ENCODE measurements at regions of chr14 and their contacts with region 1.

Region 1: DNA sequence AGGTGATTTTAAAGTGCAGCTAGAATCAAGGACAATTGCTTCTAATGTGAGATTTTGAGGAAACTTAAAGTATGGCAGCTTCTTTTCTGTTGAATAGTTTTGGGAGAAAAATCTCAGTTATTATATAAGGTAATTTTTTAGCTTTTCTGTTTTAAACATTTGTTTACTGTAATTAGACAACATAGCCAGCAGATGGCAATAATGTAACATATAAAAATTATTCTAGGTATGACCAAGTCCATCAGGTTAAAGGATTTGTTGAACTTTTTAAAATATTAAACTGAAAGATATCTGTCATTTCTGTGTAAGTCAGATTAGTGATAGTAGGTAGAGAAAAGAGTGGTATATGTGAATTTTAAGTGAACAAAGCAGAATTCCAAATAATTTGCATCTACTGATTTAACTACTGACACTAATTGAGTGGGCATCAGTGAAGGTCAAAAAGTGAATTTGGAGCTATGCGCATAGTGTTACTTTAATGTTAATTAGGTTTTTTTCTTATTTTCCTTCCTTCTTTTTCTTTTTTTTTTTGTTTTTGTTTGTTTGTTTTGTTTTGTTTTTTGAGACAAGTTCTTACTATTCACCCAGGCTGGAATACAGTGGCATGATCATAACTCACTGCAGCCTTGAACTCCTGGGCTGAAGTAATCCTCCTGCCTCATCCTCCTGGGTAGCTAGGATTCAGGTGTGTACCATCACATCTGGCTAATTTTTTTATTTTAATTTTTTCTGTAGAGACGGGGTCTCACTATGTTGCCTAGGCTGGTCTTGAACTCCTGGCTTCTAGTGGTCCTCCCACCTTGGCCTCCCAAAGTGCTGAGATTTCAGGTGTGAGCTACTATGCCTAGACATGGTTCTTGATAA is 18.6 kb downstream of the PRORP start:
- DNase-seq: peak; percentile 45
- H3K4me3 ChIP-seq: no peak overlapping the region
- H3K27ac ChIP-seq: no peak overlapping the region
- H3K4me1 ChIP-seq: no peaks in the 10 kb centered on the region
- H3K27me3 ChIP-seq: no peaks in the 10 kb centered on the region
- CTCF ChIP-seq: peak; percentile 71
- EP300 ChIP-seq: no peak
- RAD21 ChIP-seq: peak; percentile 69

Region 2: GRCh38 chr14:35155962-35156361 is 15.0 kb after region 1 on chr14:
- CTCF ChIA-PET with region 1: interaction called, 20 read pairs
- POLR2A ChIA-PET with region 1: no interaction called
- DNase-seq: peak; percentile 21
- H3K4me3 ChIP-seq: no peak overlapping the region
- H3K27ac ChIP-seq: peak overlapping the region; percentile 35 to 76
- H3K4me1 ChIP-seq: peaks cover 11 to 33% of the 10 kb centered on the region in 2 experiments
- H3K27me3 ChIP-seq: no peaks in the 10 kb centered on the region
- CTCF ChIP-seq: no peak
- EP300 ChIP-seq: no peak
- RAD21 ChIP-seq: no peak

Region 3: GRCh38 chr14:35404449-35405303 is 263.7 kb after region 1 on chr14 and contains the start of gene NFKBIA:
- CTCF ChIA-PET with region 1: interaction called, 26 read pairs
- POLR2A ChIA-PET with region 1: interaction called, 4 read pairs
- DNase-seq: peak; percentile 87
- H3K4me3 ChIP-seq: peak within 1 kb of the TSS; percentile 85 to 87
- H3K27ac ChIP-seq: peak within 1 kb of the TSS; percentile 92 to 98
- H3K4me1 ChIP-seq: peaks cover 25 to 33% of the 10 kb centered on the region in 2 experiments; a peak in 3 of 4 replicates
- H3K27me3 ChIP-seq: no peaks in the 10 kb centered on the region
- CTCF ChIP-seq: peak; percentile 52
- EP300 ChIP-seq: 0 out of 4 replicates have a peak, but pooled peaks of 1 of the 2 experiments have one; percentile 6
- RAD21 ChIP-seq: 0 out of 2 replicates have a peak, but pooled peaks have one; percentile 33
- polyA plus RNA-seq, gene NFKBIA: 56.3 and 56.7 TPM in 2 replicates

Region 4: DNA sequence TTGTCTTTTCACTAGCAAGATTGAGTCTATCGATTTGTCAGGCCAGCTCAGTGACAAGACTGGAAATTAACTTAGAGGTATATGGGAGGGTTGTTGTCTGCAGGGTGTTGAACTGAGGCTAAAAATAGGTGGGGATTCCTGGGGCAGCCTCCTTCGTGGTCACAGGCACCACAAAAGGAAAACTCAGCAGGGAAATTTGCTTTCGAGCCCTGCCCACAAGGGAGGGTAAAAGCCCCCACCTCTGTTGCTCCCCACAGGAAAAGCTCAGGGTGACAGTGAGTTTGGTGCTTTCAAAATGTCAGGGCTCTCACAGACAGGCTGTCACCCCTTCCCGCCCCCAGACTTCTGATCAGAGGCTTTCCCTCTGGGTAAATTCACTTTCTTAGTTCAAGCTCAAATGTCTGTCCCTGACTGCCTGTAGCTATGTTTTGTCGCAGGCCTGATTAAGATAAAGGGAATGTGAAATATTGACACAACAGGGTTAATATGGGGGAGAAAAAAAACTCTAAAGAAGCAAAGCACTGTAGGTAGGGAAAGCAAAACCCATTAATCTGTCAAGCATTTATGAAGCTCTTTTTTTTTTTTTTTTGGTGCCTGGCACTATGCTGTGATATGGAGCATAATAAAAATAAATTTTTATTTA is 275.3 kb after region 1 on chr14:
- CTCF ChIA-PET with region 1: interaction called, 102 read pairs
- POLR2A ChIA-PET with region 1: no interaction called
- DNase-seq: no peak
- H3K4me3 ChIP-seq: no peak overlapping the region
- H3K27ac ChIP-seq: no peak overlapping the region
- H3K4me1 ChIP-seq: peaks cover 35% of the 10 kb centered on the region in 2 experiments
- H3K27me3 ChIP-seq: no peaks in the 10 kb centered on the region
- CTCF ChIP-seq: no peak
- EP300 ChIP-seq: no peak
- RAD21 ChIP-seq: no peak

Region 5: DNA sequence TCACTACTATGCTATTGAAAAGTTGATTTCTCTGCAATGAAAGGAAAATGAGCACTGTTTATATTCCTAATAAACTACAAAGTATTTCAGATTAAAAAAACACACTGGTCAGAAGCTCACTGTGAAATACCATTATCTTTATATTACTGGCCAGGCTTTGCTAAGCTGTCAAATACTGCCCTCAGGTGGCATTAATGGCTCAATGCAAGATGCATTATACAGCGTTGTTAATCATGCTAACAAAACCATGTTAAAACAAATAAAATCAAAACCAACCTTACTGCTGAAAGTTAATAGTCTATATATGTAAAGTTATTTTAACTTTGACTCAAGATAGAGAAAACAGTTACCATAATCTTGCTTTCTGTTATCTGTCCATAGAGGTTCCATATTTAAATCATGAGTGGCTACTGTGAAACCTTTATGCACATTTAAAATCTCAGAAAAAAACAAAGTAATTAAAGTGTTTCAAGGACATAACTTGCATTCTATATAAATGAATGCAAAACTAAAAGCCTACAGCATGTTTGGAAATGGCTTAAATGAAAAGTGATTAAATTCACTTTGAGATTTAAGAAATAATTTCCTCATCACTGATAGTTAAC is 546.5 kb after region 1 on chr14:
- CTCF ChIA-PET with region 1: interaction called, 35 read pairs
- POLR2A ChIA-PET with region 1: no interaction called
- DNase-seq: peak; percentile 46
- H3K4me3 ChIP-seq: no peak overlapping the region
- H3K27ac ChIP-seq: no peak overlapping the region
- H3K4me1 ChIP-seq: no peaks in the 10 kb centered on the region; a peak in 1 of 4 replicates
- H3K27me3 ChIP-seq: no peaks in the 10 kb centered on the region
- CTCF ChIP-seq: peak; percentile 96
- EP300 ChIP-seq: no peak
- RAD21 ChIP-seq: peak; percentile 100

Region 6: GRCh38 chr14:35814371-35815005 is 673.5 kb after region 1 on chr14:
- CTCF ChIA-PET with region 1: interaction called, 67 read pairs
- POLR2A ChIA-PET with region 1: interaction called, 4 read pairs
- DNase-seq: peak; percentile 51
- H3K4me3 ChIP-seq: peak overlapping the region in 1 of 2 experiments; percentile 19; a peak in 1 of 4 replicates
- H3K27ac ChIP-seq: no peak overlapping the region
- H3K4me1 ChIP-seq: no peaks in the 10 kb centered on the region
- H3K27me3 ChIP-seq: no peaks in the 10 kb centered on the region
- CTCF ChIP-seq: peak; percentile 76
- EP300 ChIP-seq: no peak
- RAD21 ChIP-seq: peak; percentile 59

Region 7: DNA sequence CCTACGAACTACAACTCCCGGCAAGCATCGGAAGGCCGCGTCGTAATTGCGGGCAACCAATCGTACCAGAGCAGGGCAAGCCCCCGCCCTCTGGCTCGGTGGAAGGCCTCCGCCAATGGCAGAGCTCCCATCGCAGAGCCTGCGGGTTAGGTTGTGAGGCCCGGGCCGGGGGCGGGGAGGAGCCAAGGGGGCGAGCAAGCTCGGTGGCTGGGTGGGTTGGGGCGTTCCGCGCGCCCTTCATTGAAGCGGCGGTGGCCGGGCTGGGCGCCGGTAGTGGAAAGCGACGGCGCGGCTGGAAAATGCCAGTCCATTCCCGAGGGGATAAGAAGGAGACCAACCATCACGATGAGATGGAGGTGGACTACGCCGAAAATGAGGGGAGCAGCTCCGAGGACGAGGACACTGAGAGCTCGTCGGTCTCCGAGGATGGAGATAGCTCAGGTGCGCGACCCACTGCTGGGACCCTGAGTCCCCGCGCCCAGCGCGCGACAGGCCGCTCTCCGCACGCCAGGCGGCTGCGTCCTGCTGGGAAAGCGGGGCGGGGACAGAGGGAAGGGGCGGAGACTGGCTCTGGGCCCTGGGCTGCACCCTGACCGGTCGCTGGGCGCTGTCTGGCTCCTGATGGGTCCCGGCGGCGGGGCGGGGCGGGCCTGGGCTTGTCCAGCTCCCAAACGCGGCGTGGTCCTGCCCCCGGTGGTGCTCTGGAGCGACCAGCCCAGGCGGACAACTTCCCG is 685.4 kb after region 1 on chr14 and contains the start of gene BRMS1L:
- CTCF ChIA-PET with region 1: interaction called, 10 read pairs
- POLR2A ChIA-PET with region 1: no interaction called
- DNase-seq: peak; percentile 97
- H3K4me3 ChIP-seq: peak within 1 kb of the TSS; percentile 88 to 94
- H3K27ac ChIP-seq: peak within 1 kb of the TSS; percentile 95 to 99
- H3K4me1 ChIP-seq: peaks cover 0 to 5% of the 10 kb centered on the region in 2 experiments; a peak in 2 of 4 replicates
- H3K27me3 ChIP-seq: no peaks in the 10 kb centered on the region
- CTCF ChIP-seq: no peak
- EP300 ChIP-seq: 0 out of 4 replicates have a peak, but pooled peaks of 1 of the 2 experiments have one; percentile 9
- RAD21 ChIP-seq: no peak
- polyA plus RNA-seq, gene BRMS1L: 7.1 and 9.1 TPM in 2 replicates

Measured in SK-N-SH (cell line).